Activated CD8-positive, alpha-beta memory T cell treated with anti-CD3 and anti-CD28 coated beads, Interleukin-2, amount 10 ng/mL, durations not matched to agents 7 days and 5 days (primary cell): ENCODE measurements at regions of chr3 and their contacts with region 1.

Region 1: GRCh38 chr3:108292905-108293328 is 3.4 kb upstream of the HHLA2 start:
- DNase-seq: no peak
- ATAC-seq: peak; percentile 77
- H3K4me3 Mint-ChIP-seq: peak overlapping the region; percentile 46
- H3K27ac Mint-ChIP-seq: peak overlapping the region; percentile 91
- H3K4me1 Mint-ChIP-seq: peaks cover 63% of the 10 kb centered on the region
- H3K27me3 Mint-ChIP-seq: no peaks in the 10 kb centered on the region

Region 2: DNA sequence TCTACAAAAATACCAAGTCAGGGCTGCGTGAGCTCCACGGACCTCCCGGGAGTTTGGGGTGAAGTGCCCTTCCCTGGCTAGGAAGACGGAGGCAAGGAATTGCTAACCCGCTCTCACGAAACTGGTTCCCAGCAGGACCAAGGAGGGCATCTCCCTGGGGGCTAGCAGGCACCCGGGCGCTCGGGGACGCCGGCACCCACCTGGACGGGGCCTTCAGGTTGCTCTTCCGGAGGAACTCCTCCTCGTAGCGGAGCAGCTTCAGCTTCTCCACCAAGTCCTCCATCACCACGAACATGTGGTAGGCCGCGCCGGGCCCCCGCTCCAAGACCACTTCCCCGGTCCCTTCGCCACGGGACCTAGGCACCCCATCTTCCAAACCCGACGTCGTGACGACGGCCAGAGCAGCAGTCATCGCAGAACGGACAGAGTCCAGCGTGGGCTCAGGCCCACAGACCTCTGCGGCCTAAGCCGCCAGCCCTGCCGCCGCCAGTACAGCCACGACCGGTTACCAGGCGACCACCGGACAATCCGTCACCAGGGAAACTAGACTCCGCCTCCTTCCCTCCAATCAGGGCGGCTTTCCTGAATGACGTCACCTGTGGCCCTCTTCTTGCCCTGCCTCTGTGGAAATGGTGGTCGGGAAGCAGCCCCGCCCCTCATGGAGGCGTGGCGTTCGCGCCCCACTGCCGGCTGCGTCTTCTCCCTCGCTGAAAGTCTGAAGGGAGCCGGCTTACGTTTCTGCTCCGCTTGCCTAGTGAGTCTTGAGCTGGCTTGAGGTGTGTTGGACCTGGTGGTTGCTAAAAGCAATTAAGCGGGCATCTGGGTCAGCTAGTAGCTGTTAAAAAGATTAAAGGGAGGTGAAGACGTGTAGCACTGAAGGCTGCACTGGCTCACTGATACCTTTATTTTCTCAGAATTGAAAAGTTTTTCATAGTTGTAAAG is 70.7 kb before region 1 on chr3 and contains the start of gene IFT57:
- CTCF ChIA-PET with region 1: interaction called, 20 read pairs
- DNase-seq: peak; percentile 98
- ATAC-seq: peak; percentile 93
- H3K4me3 Mint-ChIP-seq: peak within 1 kb of the TSS; percentile 100
- H3K27ac Mint-ChIP-seq: peak within 1 kb of the TSS; percentile 99
- H3K4me1 Mint-ChIP-seq: peaks cover 44% of the 10 kb centered on the region
- H3K27me3 Mint-ChIP-seq: no peaks in the 10 kb centered on the region
- total RNA-seq, gene IFT57: 18.5 to 25.1 TPM

Region 3: DNA sequence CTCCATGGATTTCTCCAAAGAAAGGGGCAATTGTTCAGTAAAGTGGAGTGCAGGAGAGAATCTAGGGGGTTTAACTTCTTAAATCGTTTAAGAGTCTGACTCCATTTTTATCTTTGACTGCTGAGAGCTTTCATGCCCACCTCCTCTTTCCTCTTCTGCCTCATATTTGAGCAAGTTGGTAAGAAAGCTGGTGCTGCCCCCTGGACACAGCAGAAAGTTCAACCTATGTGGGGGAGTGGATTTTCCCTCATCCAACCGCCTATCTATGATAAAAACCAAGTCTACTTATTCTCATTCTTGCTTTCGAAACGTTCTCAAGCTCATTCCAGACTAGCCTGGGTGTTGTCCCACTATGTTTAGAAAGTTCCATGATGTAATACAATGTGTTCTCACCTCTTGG is 29.4 kb after region 1 on chr3:
- CTCF ChIA-PET with region 1: no interaction called
- DNase-seq: no peak
- ATAC-seq: no peak
- H3K4me3 Mint-ChIP-seq: no peak overlapping the region
- H3K27ac Mint-ChIP-seq: no peak overlapping the region
- H3K4me1 Mint-ChIP-seq: peaks cover 25% of the 10 kb centered on the region
- H3K27me3 Mint-ChIP-seq: peaks cover 7% of the 10 kb centered on the region